ENCODE measurements at regions of chr2 and their contacts with region 1.

Region 1: GRCh38 chr2:69933839-69934613 is 19.1 kb downstream of the MXD1 start:
- DNase-seq: peak; percentile 35 to 75 (median 60)
- ATAC-seq: peak; percentile 87
- H3K4me3 ChIP-seq: no peak overlapping the region
- H3K27ac ChIP-seq: peak overlapping the region; percentile 71
- H3K4me1 ChIP-seq: peaks cover 4 to 26% of the 10 kb centered on the region in 2 experiments; a peak in 3 of 5 replicates
- H3K27me3 ChIP-seq: no peaks in the 10 kb centered on the region
- CTCF ChIP-seq: no peak
- EP300 ChIP-seq: peak; percentile 78
- POLR2A ChIP-seq: no peak
- RAD21 ChIP-seq: peak; percentile 27 to 29; a peak in 3 of 4 replicates

Region 2: DNA sequence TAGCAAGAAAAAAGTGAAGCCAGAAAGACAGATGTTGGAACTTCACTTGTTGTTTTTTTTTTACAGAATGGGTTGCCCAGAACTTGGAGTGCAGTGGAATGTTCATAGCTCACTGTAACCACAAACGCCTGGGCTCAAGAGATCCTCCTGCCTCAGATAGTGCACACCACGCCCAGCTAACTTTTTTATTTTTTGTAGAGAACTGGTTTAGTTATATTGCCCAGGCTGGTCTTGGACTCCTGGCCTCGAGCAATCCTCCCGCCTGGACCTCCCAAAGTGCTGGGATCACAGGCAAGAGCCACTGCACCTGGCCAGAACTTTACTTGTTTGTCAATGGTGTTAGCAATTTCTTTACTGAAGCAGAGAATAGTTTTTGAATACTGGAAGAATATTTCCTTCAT is 39.3 kb after region 1 on chr2:
- CTCF ChIA-PET with region 1: no interaction called
- POLR2A ChIA-PET with region 1: no interaction called
- in situ Hi-C with region 1: no loop called
- intact Hi-C with region 1: loop called (anchors 5 kb)
- DNase-seq: peak; percentile 58 to 81 (median 59)
- ATAC-seq: peak; percentile 66
- H3K4me3 ChIP-seq: no peak overlapping the region
- H3K27ac ChIP-seq: peak overlapping the region; percentile 35
- H3K4me1 ChIP-seq: peaks cover 58 to 60% of the 10 kb centered on the region in 2 experiments
- H3K27me3 ChIP-seq: no peaks in the 10 kb centered on the region
- CTCF ChIP-seq: no peak
- EP300 ChIP-seq: peak; percentile 63
- POLR2A ChIP-seq: no peak
- RAD21 ChIP-seq: 0 out of 4 replicates have a peak, but pooled peaks of 1 of the 2 experiments have one; percentile 10

Region 3: GRCh38 chr2:70070541-70071268 is 136.7 kb after region 1 on chr2:
- CTCF ChIA-PET with region 1: no interaction called
- POLR2A ChIA-PET with region 1: no interaction called
- in situ Hi-C with region 1: no loop called
- intact Hi-C with region 1: loop called (anchors 5 kb)
- DNase-seq: peak; percentile 75 to 87 (median 81)
- ATAC-seq: peak; percentile 96
- H3K4me3 ChIP-seq: no peak overlapping the region
- H3K27ac ChIP-seq: peak overlapping the region; percentile 47; the same call in 1 of the 3 replicates
- H3K4me1 ChIP-seq: peaks cover 2 to 5% of the 10 kb centered on the region in 2 experiments; a peak in 3 of 5 replicates
- H3K27me3 ChIP-seq: no peaks in the 10 kb centered on the region
- CTCF ChIP-seq: peak; percentile 88 to 95 (median 89)
- EP300 ChIP-seq: no peak
- POLR2A ChIP-seq: no peak
- RAD21 ChIP-seq: peak; percentile 91 to 94

Measured in K562 (cell line).